ENCODE measurements at regions of chr1 and their contacts with region 1.

Region 1: DNA sequence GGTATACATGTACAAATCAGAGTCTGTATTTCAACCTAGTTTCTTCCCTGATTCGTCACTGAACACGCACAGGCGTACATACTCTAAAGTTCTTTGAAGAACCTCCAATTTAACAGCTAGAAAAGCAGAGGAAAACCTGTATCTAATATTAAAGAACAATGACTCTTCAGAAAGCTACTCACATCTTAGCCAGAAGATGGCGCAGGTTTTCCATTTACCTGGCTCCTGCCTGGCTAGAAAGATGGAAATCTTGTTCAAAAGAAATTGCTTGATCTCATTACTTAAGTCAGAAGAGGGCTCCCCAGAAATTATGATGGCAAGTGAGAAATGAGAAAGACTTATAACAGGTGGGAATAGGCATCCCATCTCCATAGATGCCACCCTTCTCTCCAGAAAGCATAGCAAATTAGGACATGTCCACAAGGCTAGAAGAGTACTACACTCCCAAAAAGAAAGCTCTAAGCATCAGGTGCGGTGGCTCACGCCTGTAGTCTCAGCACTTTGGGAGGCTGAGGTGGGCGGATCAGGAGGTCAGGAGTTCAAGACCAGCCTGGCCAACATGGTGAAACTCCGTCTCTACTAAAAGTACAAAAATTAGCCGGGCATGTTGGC is 19.0 kb upstream of the L1TD1 start:
- DNase-seq: peak; percentile 40
- H3K4me3 ChIP-seq: no peak overlapping the region
- H3K27ac ChIP-seq: no peak overlapping the region
- H3K4me1 ChIP-seq: no peaks in the 10 kb centered on the region
- H3K27me3 ChIP-seq: no peaks in the 10 kb centered on the region
- CTCF ChIP-seq: peak; percentile 40 to 85 (median 70)
- POLR2A ChIP-seq: no peak

Region 2: DNA sequence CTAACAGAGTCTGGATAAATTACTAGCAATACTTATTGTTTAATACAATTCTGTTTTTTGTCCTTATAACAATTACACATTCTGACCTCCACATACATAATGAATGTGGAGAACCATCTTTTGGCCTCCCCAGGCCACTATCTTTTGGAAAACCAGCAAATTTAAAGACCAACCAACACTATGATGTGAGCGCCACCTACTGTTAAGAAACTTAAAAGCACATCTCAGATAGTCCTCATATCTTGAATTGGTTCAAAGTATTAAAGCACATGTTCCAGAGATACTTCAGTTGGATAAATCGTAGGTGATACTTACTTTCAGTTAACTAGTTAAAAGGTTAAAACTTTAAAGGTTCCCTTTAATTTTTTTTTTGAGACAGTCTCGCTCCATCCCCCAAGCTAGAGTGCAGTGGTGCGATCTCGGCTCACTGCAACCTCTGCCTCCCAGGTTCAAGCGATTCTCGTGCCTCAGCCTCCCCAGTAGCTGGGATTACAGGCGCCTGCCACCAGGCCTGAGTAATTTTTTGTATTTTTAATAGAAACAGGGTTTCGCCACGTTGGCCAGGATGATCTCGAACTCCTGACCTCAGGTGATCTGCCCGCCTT is 231.8 kb after region 1 on chr1:
- intact Hi-C with region 1: loop called (anchors 2 kb)
- DNase-seq: peak; percentile 38
- H3K4me3 ChIP-seq: no peak overlapping the region
- H3K27ac ChIP-seq: no peak overlapping the region
- H3K4me1 ChIP-seq: no peaks in the 10 kb centered on the region
- H3K27me3 ChIP-seq: no peaks in the 10 kb centered on the region
- CTCF ChIP-seq: peak; percentile 37 to 85 (median 81)
- POLR2A ChIP-seq: no peak